SK-N-SH (cell line): ENCODE measurements at regions of chr4 and their contacts with region 1.

Region 1: GRCh38 chr4:87390891-87391575 is at the start of gene HSD17B11:
- DNase-seq: peak; percentile 90
- H3K4me3 ChIP-seq: peak within 1 kb of the TSS; percentile 69 to 80
- H3K27ac ChIP-seq: peak within 1 kb of the TSS; percentile 83 to 96
- H3K4me1 ChIP-seq: peaks cover 0 to 4% of the 10 kb centered on the region in 2 experiments; a peak in 1 of 4 replicates
- H3K27me3 ChIP-seq: no peaks in the 10 kb centered on the region
- CTCF ChIP-seq: peak; percentile 36; the same call in 1 of the 2 replicates
- EP300 ChIP-seq: no peak
- RAD21 ChIP-seq: peak; percentile 23
- polyA plus RNA-seq, gene HSD17B11: 13.2 and 17.7 TPM in 2 replicates

Region 2: DNA sequence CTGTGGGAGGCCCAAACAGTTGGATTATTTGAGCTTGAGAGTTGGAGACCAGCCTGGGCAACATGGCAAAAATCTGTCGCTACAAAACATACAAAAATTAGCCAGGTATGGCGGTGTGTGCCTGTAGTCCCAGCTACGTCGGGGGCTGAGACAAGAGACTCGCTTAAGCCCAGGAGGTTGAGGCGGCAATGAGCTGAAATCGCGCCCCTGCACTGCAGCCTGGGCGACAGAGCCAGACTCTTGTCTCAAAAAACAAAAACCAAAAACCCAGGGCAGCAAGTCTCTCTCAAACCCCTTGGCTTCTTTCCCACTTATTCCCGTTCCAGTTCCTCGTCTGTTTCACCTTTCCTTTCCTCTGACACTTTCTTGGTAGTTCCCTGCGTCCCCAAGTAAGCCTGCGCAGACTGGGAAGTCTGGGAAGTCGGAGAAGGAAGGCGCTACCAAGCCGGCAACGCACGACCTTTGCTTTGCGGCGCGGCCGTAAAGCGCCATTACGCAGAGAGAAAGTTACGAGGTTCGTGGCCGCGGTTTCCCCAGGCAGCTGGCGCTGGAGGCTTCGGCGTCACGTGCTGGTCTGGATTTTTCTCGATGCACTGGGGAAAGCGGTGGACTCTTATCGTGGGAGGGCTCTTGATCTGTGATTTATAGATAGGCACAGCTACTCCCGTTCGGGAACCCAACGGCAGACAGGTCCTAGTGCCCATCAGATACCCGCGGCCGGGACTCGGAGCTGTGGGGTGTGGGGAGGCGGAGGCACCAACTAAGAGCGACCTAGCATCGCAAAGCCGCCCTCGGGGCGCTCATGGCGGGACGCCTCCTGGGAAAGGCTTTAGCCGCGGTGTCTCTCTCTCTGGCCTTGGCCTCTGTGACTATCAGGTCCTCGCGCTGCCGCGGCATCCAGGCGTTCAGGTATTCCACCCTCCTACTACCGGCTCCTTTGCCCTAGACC is 31.3 kb after region 1 on chr4 and contains the start of gene NUDT9:
- CTCF ChIA-PET with region 1: interaction called, 6 read pairs
- POLR2A ChIA-PET with region 1: interaction called, 24 read pairs
- DNase-seq: peak; percentile 89
- H3K4me3 ChIP-seq: peak within 1 kb of the TSS; percentile 75 to 95
- H3K27ac ChIP-seq: peak within 1 kb of the TSS; percentile 96
- H3K4me1 ChIP-seq: peaks cover 6% of the 10 kb centered on the region in 2 experiments; a peak in 1 of 4 replicates
- H3K27me3 ChIP-seq: no peaks in the 10 kb centered on the region
- CTCF ChIP-seq: no peak
- EP300 ChIP-seq: peak; percentile 8 to 60; a peak in 2 of 4 replicates
- RAD21 ChIP-seq: no peak
- polyA plus RNA-seq, gene NUDT9: 21.5 and 21.8 TPM in 2 replicates